HCT116 (cell line): ENCODE measurements at regions of chr5 and their contacts with region 1.

Region 1: GRCh38 chr5:5492087-5492933 is 69.8 kb downstream of the ICE1 start:
- DNase-seq: peak; percentile 57
- ATAC-seq: peak; percentile 44; the same call in 1 of the 2 replicates
- H3K4me3 ChIP-seq: no peak overlapping the region
- H3K27ac ChIP-seq: no peak overlapping the region
- H3K4me1 ChIP-seq: peaks cover 6 to 7% of the 10 kb centered on the region in 2 experiments
- H3K27me3 ChIP-seq: no peaks in the 10 kb centered on the region
- CTCF ChIP-seq: peak; percentile 40 to 83 (median 69); a peak in 5 of 6 replicates
- POLR2A ChIP-seq: no peak
- RAD21 ChIP-seq: peak; percentile 83

Region 2: GRCh38 chr5:5658226-5658625 is 165.9 kb after region 1 on chr5:
- CTCF ChIA-PET with region 1: no interaction called
- POLR2A ChIA-PET with region 1: no interaction called
- RAD21 ChIA-PET with region 1: no interaction called
- intact Hi-C with region 1: no loop called
- DNase-seq: no peak
- ATAC-seq: no peak
- H3K4me3 ChIP-seq: no peak overlapping the region
- H3K27ac ChIP-seq: no peak overlapping the region
- H3K4me1 ChIP-seq: no peaks in the 10 kb centered on the region
- H3K27me3 ChIP-seq: peaks cover 35% of the 10 kb centered on the region
- CTCF ChIP-seq: no peak
- POLR2A ChIP-seq: no peak
- RAD21 ChIP-seq: no peak

Region 3: GRCh38 chr5:6291961-6292360 is 799.7 kb after region 1 on chr5:
- CTCF ChIA-PET with region 1: no interaction called
- POLR2A ChIA-PET with region 1: no interaction called
- RAD21 ChIA-PET with region 1: no interaction called
- intact Hi-C with region 1: loop called (anchors 10 kb)
- DNase-seq: peak; percentile 12
- ATAC-seq: peak; percentile 59; the same call in 1 of the 2 replicates
- H3K4me3 ChIP-seq: no peak overlapping the region
- H3K27ac ChIP-seq: no peak overlapping the region
- H3K4me1 ChIP-seq: no peaks in the 10 kb centered on the region
- H3K27me3 ChIP-seq: no peaks in the 10 kb centered on the region
- CTCF ChIP-seq: peak; percentile 13 to 24 (median 19); a peak in 2 of 6 replicates
- POLR2A ChIP-seq: no peak
- RAD21 ChIP-seq: peak; percentile 48

Region 4: GRCh38 chr5:6435356-6435755 is 943.0 kb after region 1 on chr5:
- CTCF ChIA-PET with region 1: interaction called, 13 read pairs
- POLR2A ChIA-PET with region 1: no interaction called
- RAD21 ChIA-PET with region 1: no interaction called
- intact Hi-C with region 1: loop called (anchors 2 kb)
- DNase-seq: peak; percentile 19
- ATAC-seq: peak; percentile 78
- H3K4me3 ChIP-seq: no peak overlapping the region
- H3K27ac ChIP-seq: no peak overlapping the region
- H3K4me1 ChIP-seq: no peaks in the 10 kb centered on the region
- H3K27me3 ChIP-seq: peaks cover 41% of the 10 kb centered on the region
- CTCF ChIP-seq: peak; percentile 21 to 60 (median 56); a peak in 5 of 6 replicates
- POLR2A ChIP-seq: no peak
- RAD21 ChIP-seq: peak; percentile 43; the same call in 1 of the 2 replicates

Region 5: GRCh38 chr5:6576861-6577501 is 1084.7 kb after region 1 on chr5:
- CTCF ChIA-PET with region 1: no interaction called
- POLR2A ChIA-PET with region 1: no interaction called
- RAD21 ChIA-PET with region 1: no interaction called
- intact Hi-C with region 1: loop called (anchors 1 kb)
- DNase-seq: peak; percentile 44
- ATAC-seq: peak; percentile 82
- H3K4me3 ChIP-seq: no peak overlapping the region
- H3K27ac ChIP-seq: no peak overlapping the region
- H3K4me1 ChIP-seq: no peaks in the 10 kb centered on the region
- H3K27me3 ChIP-seq: peaks cover 34% of the 10 kb centered on the region; the same call in 1 of the 2 replicates
- CTCF ChIP-seq: peak; percentile 26 to 67 (median 57); a peak in 5 of 6 replicates
- POLR2A ChIP-seq: no peak
- RAD21 ChIP-seq: peak; percentile 65